GM10248 (cell line): ENCODE measurements at regions of chr16 and their contacts with region 1.

Region 1: DNA sequence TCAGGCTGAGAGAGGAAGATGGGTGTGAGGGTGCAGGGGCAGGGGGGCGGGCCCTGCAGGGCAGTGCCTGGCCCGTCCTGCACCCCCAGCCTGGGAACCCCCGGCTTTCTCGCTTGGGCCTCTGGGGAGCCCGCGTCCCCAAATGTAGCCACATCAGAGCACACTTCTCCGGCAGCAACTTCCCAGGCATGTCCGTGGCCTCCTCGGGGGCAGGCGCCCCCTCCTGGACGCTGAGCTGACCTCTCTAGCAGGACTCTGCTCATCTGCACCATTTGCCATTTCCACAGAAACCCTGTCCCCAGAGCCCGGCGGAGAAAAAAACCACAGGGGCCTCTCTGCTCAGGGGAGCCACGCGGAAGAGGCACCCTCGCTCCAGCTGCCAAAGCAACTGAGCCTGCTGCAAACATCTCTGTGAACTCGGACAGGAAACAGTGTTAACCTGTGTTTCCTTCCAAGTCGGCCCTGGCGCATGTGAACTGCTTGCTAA is 63.4 kb downstream of the KLHDC4 start:
- DNase-seq: peak; percentile 85
- CTCF ChIP-seq: peak; percentile 81

Region 2: DNA sequence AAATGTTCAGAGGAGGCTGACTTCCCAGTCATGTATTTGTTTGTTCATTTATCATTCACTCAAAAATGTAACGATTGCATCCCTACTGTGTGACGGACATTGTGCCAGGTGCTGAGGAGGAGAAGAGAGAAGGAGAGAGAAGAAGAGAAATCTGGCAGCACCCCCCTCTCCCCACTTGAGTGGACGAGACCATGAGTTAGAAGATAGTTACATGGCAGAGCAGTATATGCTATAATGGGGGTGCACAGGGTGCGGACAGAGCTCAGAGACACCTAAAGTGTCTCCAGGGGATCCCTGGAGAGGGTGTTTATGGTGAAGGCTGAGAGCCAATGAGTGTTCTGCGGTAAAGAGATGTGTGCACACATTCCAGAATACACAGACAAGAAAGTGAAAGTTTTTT is 106.7 kb before region 1 on chr16:
- CTCF ChIA-PET with region 1: no interaction called
- POLR2A ChIA-PET with region 1: no interaction called
- DNase-seq: no peak
- CTCF ChIP-seq: no peak

Region 3: DNA sequence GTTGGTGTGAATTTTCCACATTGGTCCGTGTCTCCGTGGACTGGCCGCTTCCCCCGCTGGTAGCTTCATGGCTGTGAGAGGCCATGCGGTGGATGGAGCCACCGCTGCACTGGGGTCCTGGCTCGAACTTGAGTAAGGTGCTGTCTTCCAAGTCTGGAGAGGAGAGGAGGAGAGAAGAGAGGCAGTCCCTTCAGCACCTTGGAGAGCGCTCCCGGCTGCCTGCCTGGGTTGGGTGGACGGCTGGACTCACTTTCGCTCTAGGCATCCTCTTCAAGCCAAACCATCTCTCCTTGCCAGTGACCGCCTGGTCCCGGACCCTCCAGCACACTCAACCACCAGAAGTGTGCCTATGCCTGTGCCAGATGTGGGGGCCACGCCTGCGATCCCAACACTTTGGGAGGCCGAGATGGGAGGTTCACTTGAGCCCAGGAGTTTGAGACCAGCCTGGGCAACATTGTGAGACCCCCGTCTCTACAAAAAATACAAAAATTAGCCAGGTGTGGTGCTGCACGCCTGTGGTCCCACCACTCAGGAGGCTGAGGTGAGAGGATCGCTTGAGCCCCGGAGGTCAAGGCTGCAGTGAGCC is 93.9 kb before region 1 on chr16:
- CTCF ChIA-PET with region 1: no interaction called
- POLR2A ChIA-PET with region 1: no interaction called
- DNase-seq: peak; percentile 70
- CTCF ChIP-seq: no peak

Region 4: DNA sequence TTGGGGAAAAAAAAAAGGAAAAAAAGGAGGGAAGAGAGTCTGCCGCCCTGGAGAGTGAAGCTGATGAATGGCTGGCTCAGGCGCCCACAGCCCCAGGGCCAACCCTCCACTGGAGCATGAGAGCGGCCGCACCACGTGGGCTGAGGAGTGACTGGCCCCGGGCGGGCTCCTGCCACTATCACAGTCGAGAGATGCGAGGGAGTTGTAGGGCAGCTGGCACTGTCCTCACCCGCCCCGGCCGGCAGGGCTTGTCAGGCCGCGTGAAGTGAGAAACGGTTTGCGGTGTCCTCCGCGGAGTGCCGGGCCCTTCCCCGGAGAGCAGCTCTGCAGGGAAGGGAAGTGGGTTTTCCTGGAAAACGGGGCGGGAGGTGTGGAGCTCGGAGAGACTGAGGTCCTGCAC is 54.1 kb before region 1 on chr16:
- CTCF ChIA-PET with region 1: no interaction called
- POLR2A ChIA-PET with region 1: no interaction called
- DNase-seq: no peak
- CTCF ChIP-seq: no peak

Region 5: GRCh38 chr16:87713451-87714229 is 11.3 kb after region 1 on chr16:
- CTCF ChIA-PET with region 1: interaction called, 15 read pairs
- POLR2A ChIA-PET with region 1: no interaction called
- DNase-seq: no peak
- CTCF ChIP-seq: no peak

Region 6: DNA sequence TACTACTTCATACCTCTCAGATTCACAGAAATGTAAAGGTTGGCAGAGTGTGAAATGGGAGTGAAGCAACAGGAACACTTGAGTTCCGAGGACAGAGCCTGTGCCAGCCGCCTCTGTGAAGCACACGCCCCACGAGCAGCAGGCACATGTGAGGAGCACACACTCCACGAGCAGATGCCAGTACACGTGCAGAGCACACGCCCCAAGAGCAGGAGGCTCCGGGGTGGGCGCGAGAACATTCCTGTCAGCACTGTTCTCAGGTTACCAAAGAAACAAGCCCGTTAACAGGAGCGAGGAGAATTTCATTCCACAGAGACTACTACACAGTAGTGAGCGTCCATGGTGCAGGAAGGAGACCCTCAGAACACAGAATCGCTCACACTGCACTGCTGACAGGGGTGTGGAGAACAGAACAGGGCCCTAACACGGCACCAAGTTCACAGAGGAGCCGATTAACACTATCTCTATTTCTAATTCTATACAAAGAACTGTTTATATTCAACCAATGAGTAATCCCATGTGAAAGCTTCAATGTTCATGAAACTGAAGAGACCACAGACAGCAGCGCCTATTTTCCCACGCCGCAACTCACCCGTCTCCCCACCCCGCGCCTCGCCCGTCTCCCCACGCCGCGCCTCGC is 23.3 kb after region 1 on chr16:
- CTCF ChIA-PET with region 1: interaction called, 13 read pairs
- POLR2A ChIA-PET with region 1: no interaction called
- DNase-seq: no peak
- CTCF ChIP-seq: no peak

Region 7: GRCh38 chr16:87765776-87766484 is 63.6 kb after region 1 on chr16 and contains the start of gene KLHDC4:
- CTCF ChIA-PET with region 1: interaction called, 11 read pairs
- POLR2A ChIA-PET with region 1: no interaction called
- DNase-seq: peak; percentile 95
- CTCF ChIP-seq: no peak